ENCODE measurements at regions of chr11 and their contacts with region 1.

Region 1: GRCh38 chr11:122682464-122682863 is 26.9 kb downstream of the UBASH3B start:
- DNase-seq: no peak
- H3K4me3 Mint-ChIP-seq: no peak overlapping the region
- H3K27ac Mint-ChIP-seq: no peak overlapping the region
- H3K4me1 Mint-ChIP-seq: peaks cover 11% of the 10 kb centered on the region
- H3K27me3 Mint-ChIP-seq: no peaks in the 10 kb centered on the region

Region 2: GRCh38 chr11:122695076-122695615 is 12.7 kb after region 1 on chr11:
- CTCF ChIA-PET with region 1: interaction called, 10 read pairs
- POLR2A ChIA-PET with region 1: no interaction called
- DNase-seq: no peak
- H3K4me3 Mint-ChIP-seq: no peak overlapping the region
- H3K27ac Mint-ChIP-seq: peak overlapping the region; percentile 47
- H3K4me1 Mint-ChIP-seq: peaks cover 76% of the 10 kb centered on the region
- H3K27me3 Mint-ChIP-seq: no peaks in the 10 kb centered on the region